GM12878 (cell line): ENCODE measurements at regions of chr7 and their contacts with region 1.

Region 1: DNA sequence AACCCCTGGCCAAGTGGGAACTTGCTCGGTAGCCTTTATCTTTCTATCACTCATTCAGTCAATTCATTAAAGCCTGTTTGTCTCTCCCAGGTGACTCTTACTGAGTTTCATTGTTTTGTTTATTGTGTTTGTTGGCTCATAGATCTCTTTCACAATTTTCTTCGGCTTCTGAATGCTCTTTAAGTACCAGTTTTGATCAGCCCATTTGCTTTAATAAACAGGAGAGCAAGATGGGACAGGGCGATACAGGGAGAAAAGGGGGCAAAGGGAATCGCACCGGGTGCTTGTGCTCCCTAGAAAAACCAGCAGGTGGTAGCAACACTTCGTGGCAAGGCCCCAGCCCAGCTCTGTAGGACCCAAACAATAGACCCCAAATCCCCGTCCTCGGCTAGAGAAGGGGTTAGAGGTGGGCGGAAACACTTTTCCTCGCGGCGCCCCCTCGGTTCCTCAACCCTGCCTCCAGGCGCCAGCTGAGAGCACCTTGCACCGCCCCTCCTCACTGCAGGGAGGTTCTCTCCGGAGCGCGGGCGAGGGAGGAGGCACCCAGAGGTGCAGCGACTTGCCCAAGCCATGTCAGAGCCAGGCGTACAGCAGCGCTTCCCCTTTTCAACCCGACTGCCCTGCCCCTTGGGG is 1.0 kb upstream of the EPHB6 start:
- DNase-seq: no peak
- ATAC-seq: peak; percentile 92
- H3K4me3 ChIP-seq: peak overlapping the region; percentile 96
- H3K27ac ChIP-seq: no peak overlapping the region
- H3K4me1 ChIP-seq: no peaks in the 10 kb centered on the region
- H3K27me3 ChIP-seq: peaks cover 0 to 8% of the 10 kb centered on the region in 2 experiments
- CTCF ChIP-seq: peak; percentile 75 to 83 (median 81)
- EP300 ChIP-seq: no peak
- POLR2A ChIP-seq: no peak
- RAD21 ChIP-seq: peak; percentile 71

Region 2: GRCh38 chr7:142776206-142776844 is 77.5 kb before region 1 on chr7:
- CTCF ChIA-PET with region 1: no interaction called
- POLR2A ChIA-PET with region 1: no interaction called
- RAD21 ChIA-PET with region 1: no interaction called
- SMC1A ChIA-PET with region 1: no interaction called
- in situ Hi-C with region 1: no loop called
- intact Hi-C with region 1: no loop called
- DNase-seq: no peak
- ATAC-seq: no peak
- H3K4me3 ChIP-seq: no peak overlapping the region
- H3K27ac ChIP-seq: no peak overlapping the region
- H3K4me1 ChIP-seq: peaks cover 10% of the 10 kb centered on the region
- H3K27me3 ChIP-seq: no peaks in the 10 kb centered on the region
- CTCF ChIP-seq: no peak
- EP300 ChIP-seq: no peak
- POLR2A ChIP-seq: no peak
- RAD21 ChIP-seq: no peak

Region 3: DNA sequence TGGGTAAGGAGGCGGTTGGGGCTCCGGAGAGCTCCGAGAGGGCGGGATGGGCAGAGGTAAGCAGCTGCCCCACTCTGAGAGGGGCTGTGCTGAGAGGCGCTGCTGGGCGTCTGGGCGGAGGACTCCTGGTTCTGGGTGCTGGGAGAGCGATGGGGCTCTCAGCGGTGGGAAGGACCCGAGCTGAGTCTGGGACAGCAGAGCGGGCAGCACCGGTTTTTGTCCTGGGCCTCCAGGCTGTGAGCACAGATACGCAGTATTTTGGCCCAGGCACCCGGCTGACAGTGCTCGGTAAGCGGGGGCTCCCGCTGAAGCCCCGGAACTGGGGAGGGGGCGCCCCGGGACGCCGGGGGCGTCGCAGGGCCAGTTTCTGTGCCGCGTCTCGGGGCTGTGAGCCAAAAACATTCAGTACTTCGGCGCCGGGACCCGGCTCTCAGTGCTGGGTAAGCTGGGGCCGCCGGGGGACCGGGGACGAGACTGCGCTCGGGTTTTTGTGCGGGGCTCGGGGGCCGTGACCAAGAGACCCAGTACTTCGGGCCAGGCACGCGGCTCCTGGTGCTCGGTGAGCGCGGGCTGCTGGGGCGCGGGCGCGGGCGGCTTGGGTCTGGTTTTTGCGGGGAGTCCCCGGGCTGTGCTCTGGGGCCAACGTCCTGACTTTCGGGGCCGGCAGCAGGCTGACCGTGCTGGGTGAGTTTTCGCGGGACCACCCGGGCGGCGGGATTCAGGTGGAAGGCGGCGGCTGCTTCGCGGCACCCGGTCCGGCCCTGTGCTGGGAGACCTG is 57.1 kb before region 1 on chr7:
- CTCF ChIA-PET with region 1: no interaction called
- POLR2A ChIA-PET with region 1: no interaction called
- RAD21 ChIA-PET with region 1: no interaction called
- SMC1A ChIA-PET with region 1: no interaction called
- in situ Hi-C with region 1: no loop called
- intact Hi-C with region 1: no loop called
- DNase-seq: no peak
- ATAC-seq: peak; percentile 66
- H3K4me3 ChIP-seq: peak overlapping the region; percentile 71
- H3K27ac ChIP-seq: peak overlapping the region; percentile 62
- H3K4me1 ChIP-seq: peaks cover 6% of the 10 kb centered on the region
- H3K27me3 ChIP-seq: no peaks in the 10 kb centered on the region
- CTCF ChIP-seq: no peak
- EP300 ChIP-seq: no peak
- POLR2A ChIP-seq: no peak; the same call in 1 of the 2 replicates
- RAD21 ChIP-seq: no peak

Region 4: GRCh38 chr7:142866361-142867058 is 12.7 kb after region 1 on chr7:
- CTCF ChIA-PET with region 1: interaction called, 18 read pairs
- POLR2A ChIA-PET with region 1: no interaction called
- RAD21 ChIA-PET with region 1: interaction called, 9 read pairs
- SMC1A ChIA-PET with region 1: interaction called, 4 read pairs
- in situ Hi-C with region 1: no loop called
- intact Hi-C with region 1: no loop called
- DNase-seq: no peak
- ATAC-seq: peak; percentile 68
- H3K4me3 ChIP-seq: no peak overlapping the region
- H3K27ac ChIP-seq: no peak overlapping the region
- H3K4me1 ChIP-seq: no peaks in the 10 kb centered on the region
- H3K27me3 ChIP-seq: no peaks in the 10 kb centered on the region
- CTCF ChIP-seq: peak; percentile 43 to 64 (median 60); a peak in 5 of 6 replicates
- EP300 ChIP-seq: no peak
- POLR2A ChIP-seq: no peak
- RAD21 ChIP-seq: peak; percentile 44; the same call in 1 of the 2 replicates

Region 5: DNA sequence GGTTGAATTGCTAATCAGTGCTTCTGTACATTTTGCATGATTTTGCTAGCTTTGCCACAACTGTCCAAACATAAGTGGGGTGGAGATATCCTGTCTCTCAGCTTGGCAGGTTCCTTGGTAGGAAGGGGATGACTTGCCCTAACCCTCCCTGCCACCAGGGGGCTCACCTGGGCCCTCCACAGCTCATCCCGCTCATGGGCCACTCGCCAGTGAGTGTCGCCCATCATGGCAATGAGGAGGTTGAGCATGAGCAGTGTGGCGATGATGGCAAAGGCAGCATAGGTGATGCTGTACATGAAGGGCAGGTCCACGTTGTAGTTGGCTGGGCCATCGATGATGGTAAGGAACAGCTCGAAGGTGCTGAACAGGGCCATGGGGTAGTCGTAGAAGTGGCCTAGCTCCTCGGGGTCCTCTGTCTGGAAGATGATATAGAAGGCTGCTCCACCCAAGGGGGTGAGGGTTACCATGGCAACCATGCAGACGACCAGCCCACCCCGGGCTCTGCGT is 19.5 kb after region 1 on chr7:
- CTCF ChIA-PET with region 1: interaction called, 18 read pairs
- POLR2A ChIA-PET with region 1: no interaction called
- RAD21 ChIA-PET with region 1: interaction called, 5 read pairs
- SMC1A ChIA-PET with region 1: interaction called, 5 read pairs
- in situ Hi-C with region 1: no loop called
- intact Hi-C with region 1: no loop called
- DNase-seq: no peak
- ATAC-seq: peak; percentile 93
- H3K4me3 ChIP-seq: no peak overlapping the region
- H3K27ac ChIP-seq: no peak overlapping the region
- H3K4me1 ChIP-seq: no peaks in the 10 kb centered on the region
- H3K27me3 ChIP-seq: no peaks in the 10 kb centered on the region
- CTCF ChIP-seq: peak; percentile 52 to 81 (median 76)
- EP300 ChIP-seq: no peak
- POLR2A ChIP-seq: no peak
- RAD21 ChIP-seq: peak; percentile 28; the same call in 1 of the 2 replicates

Region 6: GRCh38 chr7:142898377-142899170 is 44.7 kb after region 1 on chr7:
- CTCF ChIA-PET with region 1: no interaction called
- POLR2A ChIA-PET with region 1: no interaction called
- RAD21 ChIA-PET with region 1: no interaction called
- SMC1A ChIA-PET with region 1: no interaction called
- in situ Hi-C with region 1: no loop called
- intact Hi-C with region 1: no loop called
- DNase-seq: no peak
- ATAC-seq: no peak
- H3K4me3 ChIP-seq: no peak overlapping the region
- H3K27ac ChIP-seq: no peak overlapping the region
- H3K4me1 ChIP-seq: no peaks in the 10 kb centered on the region
- H3K27me3 ChIP-seq: peaks cover 0 to 3% of the 10 kb centered on the region in 2 experiments; a peak in 3 of 4 replicates
- CTCF ChIP-seq: no peak
- EP300 ChIP-seq: no peak
- POLR2A ChIP-seq: no peak
- RAD21 ChIP-seq: no peak